ENCODE measurements at regions of chr17 and their contacts with region 1.

Region 1: DNA sequence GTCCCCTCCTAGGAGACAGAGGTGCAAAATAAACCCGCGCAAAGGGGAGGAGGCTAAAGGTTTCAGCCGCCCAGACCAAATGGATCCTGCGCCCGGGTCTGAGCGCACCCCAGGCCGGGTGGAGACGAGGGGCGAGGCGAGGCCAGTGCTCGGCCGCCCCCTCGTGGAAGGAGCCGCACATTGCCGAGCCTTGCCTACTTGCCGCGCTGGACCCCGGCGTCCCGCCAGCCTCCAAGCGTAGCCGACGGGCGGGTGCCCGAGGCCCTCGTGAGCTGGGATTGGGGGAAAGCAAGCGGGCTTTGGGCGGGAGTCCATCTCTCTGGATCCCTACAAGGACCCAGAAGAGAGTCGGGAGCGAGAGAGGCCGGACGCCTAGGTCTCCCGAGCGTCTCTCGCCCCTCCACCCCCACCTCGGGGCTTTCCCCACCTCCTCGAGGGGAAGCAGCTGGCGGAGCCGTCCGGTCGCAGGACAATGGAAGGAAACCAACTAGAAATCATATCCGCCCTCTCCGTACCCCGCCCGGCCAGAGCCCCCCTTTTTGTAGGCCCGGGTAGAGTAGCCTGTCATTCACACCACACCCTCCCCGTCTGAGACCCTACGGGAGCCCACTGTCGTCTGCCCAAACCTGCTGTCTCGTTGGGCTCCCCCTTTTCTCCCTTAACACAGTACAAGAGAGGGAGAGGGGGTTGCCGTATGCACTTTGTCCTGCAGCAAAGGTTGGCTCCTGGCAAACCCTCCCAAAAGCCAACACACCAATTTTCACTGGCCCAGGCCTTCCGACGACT is 664 bp upstream of the BCL6B start:
- DNase-seq: peak; percentile 75
- H3K4me3 Mint-ChIP-seq: peak overlapping the region; percentile 22
- H3K27ac Mint-ChIP-seq: peak overlapping the region; percentile 79
- H3K4me1 Mint-ChIP-seq: peaks cover 60% of the 10 kb centered on the region
- H3K27me3 Mint-ChIP-seq: peaks cover 4% of the 10 kb centered on the region

Region 2: GRCh38 chr17:6981426-6981825 is 40.8 kb before region 1 on chr17:
- CTCF ChIA-PET with region 1: no interaction called
- POLR2A ChIA-PET with region 1: no interaction called
- DNase-seq: peak; percentile 16
- H3K4me3 Mint-ChIP-seq: peak overlapping the region; percentile 13
- H3K27ac Mint-ChIP-seq: no peak overlapping the region
- H3K4me1 Mint-ChIP-seq: peaks cover 20% of the 10 kb centered on the region
- H3K27me3 Mint-ChIP-seq: peaks cover 5% of the 10 kb centered on the region

Region 3: DNA sequence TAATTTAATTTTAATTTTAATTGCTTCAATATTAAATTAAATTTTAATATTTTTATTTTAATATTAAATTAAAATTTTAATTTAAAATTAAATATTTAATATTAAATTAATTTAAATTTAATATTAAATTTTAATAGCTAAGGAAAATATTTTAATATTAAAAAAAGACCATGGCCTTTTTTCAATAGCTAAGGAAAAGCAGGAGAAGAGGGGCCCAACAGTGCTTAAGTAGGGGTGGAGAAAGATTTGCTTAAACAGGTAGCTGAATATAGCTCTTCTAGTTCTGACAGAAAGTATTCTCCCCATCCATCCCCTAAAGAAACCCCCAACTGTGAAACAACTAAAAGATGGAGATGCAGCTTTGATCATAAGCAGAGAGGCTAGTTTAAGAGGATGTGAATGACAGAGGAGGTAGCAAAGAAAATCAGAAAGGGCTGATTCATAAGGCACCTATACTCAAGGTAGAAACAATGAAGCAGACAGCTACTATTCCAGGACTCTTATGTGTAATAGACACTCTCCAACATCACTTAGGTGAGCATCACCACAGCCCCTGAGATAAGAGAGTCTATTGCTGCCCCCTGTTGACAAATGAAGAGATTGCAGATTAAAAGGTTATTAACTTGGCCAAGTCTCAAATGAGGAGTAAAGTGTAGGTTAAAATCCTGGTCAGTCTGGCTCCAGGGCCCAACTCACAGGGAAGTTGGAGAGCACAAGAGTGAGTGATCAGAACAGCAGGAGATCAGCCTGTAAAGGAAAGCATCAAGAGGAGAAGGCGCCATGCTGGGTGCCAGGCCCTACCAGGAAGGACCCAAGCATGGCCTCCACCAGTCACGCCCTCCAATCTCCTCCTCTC is 17.6 kb before region 1 on chr17:
- CTCF ChIA-PET with region 1: interaction called, 17 read pairs
- POLR2A ChIA-PET with region 1: no interaction called
- DNase-seq: peak; percentile 70
- H3K4me3 Mint-ChIP-seq: no peak overlapping the region
- H3K27ac Mint-ChIP-seq: peak overlapping the region; percentile 15
- H3K4me1 Mint-ChIP-seq: peaks cover 23% of the 10 kb centered on the region
- H3K27me3 Mint-ChIP-seq: no peaks in the 10 kb centered on the region

Region 4: DNA sequence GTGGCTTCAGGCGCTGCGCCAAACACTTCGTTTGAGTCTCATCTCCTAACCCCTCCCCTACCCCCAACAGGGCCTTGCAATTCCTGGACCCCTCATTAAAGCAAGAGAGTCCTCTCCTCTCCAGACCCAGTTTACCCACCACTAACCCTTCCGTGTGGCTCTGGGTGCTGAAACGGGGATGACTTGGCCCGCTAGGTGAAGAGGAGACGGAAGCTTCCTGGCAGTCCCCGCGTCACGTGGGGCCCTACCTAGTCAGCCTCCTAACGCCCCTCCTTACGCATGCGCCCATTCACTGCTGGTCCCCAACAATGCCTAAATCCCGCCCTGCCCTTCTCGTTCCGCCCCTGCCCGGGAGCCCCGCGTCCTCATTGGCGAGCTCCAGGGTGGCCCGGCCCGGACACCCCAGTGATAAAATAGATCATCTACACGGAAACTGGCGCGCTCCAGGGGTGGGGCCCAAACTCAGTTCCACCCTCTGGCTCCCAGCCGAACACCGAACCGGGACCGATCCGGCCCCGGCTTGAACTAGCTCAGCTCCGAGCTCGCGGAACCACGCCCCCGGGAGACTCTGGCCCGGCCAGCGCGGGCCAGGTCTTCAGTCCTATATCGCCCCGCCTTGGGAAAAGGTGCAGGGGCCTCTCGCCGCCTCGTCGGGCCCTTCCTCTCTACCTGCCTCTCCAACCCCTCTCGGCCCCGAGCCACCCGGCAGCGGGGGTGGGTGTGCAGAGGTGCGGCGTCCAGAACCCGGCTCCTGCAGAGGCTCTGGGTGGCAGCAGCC is 13.6 kb after region 1 on chr17 and contains the start of gene SLC16A13:
- CTCF ChIA-PET with region 1: interaction called, 15 read pairs
- POLR2A ChIA-PET with region 1: interaction called, 5 read pairs
- DNase-seq: peak; percentile 99
- H3K4me3 Mint-ChIP-seq: peak within 1 kb of the TSS; percentile 87
- H3K27ac Mint-ChIP-seq: peak within 1 kb of the TSS; percentile 95
- H3K4me1 Mint-ChIP-seq: peaks cover 60% of the 10 kb centered on the region
- H3K27me3 Mint-ChIP-seq: no peaks in the 10 kb centered on the region
- total RNA-seq, gene SLC16A13: 18.0 to 19.1 TPM

Measured in activated CD4-positive, alpha-beta T cell treated with anti-CD3 and anti-CD28 coated beads, Interleukin-2, amount 10 ng/mL, durations not matched to agents 7 days and 5 days (primary cell).